CD4-positive, alpha-beta memory T cell (primary cell): ENCODE measurements at regions of chr2 and their contacts with region 1.

Region 1: GRCh38 chr2:240586198-240586918 is at the start of gene CAPN10:
- DNase-seq: peak; percentile 96 to 98 (median 97)
- H3K4me3 ChIP-seq: peak within 1 kb of the TSS; percentile 63 to 99
- H3K4me3 Mint-ChIP-seq: peak within 1 kb of the TSS; percentile 93 to 98 (median 96)
- H3K27ac ChIP-seq: peak within 1 kb of the TSS; percentile 80
- H3K27ac Mint-ChIP-seq: peak within 1 kb of the TSS; percentile 95 to 98 (median 96)
- H3K4me1 ChIP-seq: peaks cover 38% of the 10 kb centered on the region
- H3K4me1 Mint-ChIP-seq: peaks cover 25 to 63% (median 44%) of the 10 kb centered on the region in 4 donors
- H3K27me3 ChIP-seq: no peaks in the 10 kb centered on the region
- H3K27me3 Mint-ChIP-seq: no peaks in the 10 kb centered on the region
- total RNA-seq, gene CAPN10: 80.6 to 83.0 TPM

Region 2: GRCh38 chr2:240619506-240620148 is 33.3 kb after region 1 on chr2:
- CTCF ChIA-PET with region 1: interaction called, 4 read pairs
- POLR2A ChIA-PET with region 1: interaction called, 69 read pairs
- intact Hi-C with region 1: loop called (anchors 2 kb)
- DNase-seq: no peak
- H3K4me3 ChIP-seq: no peak overlapping the region
- H3K4me3 Mint-ChIP-seq: peak overlapping the region in 1 of 8 donors; percentile 24
- H3K27ac ChIP-seq: no peak overlapping the region
- H3K27ac Mint-ChIP-seq: peak overlapping the region in 5 of 7 donors; percentile 40 to 75 (median 57)
- H3K4me1 ChIP-seq: peaks cover 45% of the 10 kb centered on the region
- H3K4me1 Mint-ChIP-seq: peaks cover 20 to 45% (median 24%) of the 10 kb centered on the region in 4 donors
- H3K27me3 ChIP-seq: no peaks in the 10 kb centered on the region
- H3K27me3 Mint-ChIP-seq: no peaks in the 10 kb centered on the region

Region 3: GRCh38 chr2:240624950-240625621 is 38.7 kb after region 1 on chr2 and contains the start of gene GPR35:
- CTCF ChIA-PET with region 1: interaction called, 4 read pairs
- POLR2A ChIA-PET with region 1: interaction called, 69 read pairs
- intact Hi-C with region 1: loop called (anchors 2 kb)
- DNase-seq: peak; percentile 74 to 96 (median 80)
- H3K4me3 ChIP-seq: no peak within 1 kb of the TSS
- H3K4me3 Mint-ChIP-seq: peak within 1 kb of the TSS; percentile 61 to 79 (median 68)
- H3K27ac ChIP-seq: peak within 1 kb of the TSS; percentile 81
- H3K27ac Mint-ChIP-seq: peak within 1 kb of the TSS; percentile 90 to 96 (median 95)
- H3K4me1 ChIP-seq: peaks cover 88% of the 10 kb centered on the region
- H3K4me1 Mint-ChIP-seq: peaks cover 34 to 70% (median 44%) of the 10 kb centered on the region in 4 donors
- H3K27me3 ChIP-seq: no peaks in the 10 kb centered on the region
- H3K27me3 Mint-ChIP-seq: no peaks in the 10 kb centered on the region
- total RNA-seq, gene GPR35: 6.3 to 6.8 TPM